ENCODE measurements at regions of chr17 and their contacts with region 1.

Region 1: GRCh38 chr17:79707931-79708891 is 22.5 kb upstream of the ENPP7 start:
- DNase-seq: peak in 3 of 5 donors; percentile 28 to 56 (median 51)
- ATAC-seq: peak in 3 of 4 donors; percentile 27 to 59 (median 35)
- H3K4me3 ChIP-seq: peak overlapping the region in 3 of 12 donors; percentile 3 to 25 (median 16)
- H3K27ac ChIP-seq: no peak overlapping the region
- H3K4me1 ChIP-seq: peaks cover 0 to 4% (median 3%) of the 10 kb centered on the region in 12 donors
- H3K27me3 ChIP-seq: peaks cover 0 to 47% (median 3%) of the 10 kb centered on the region in 9 donors
- CTCF ChIP-seq: peak; percentile 72 to 84 (median 80)
- POLR2A ChIP-seq: no peak

Region 2: GRCh38 chr17:79087428-79088143 is 620.6 kb before region 1 on chr17:
- intact Hi-C with region 1: loop called in 4 of 10 experiments (anchors 10 kb)
- DNase-seq: peak; percentile 56 to 83 (median 64)
- ATAC-seq: peak; percentile 49 to 73 (median 64)
- H3K4me3 ChIP-seq: no peak overlapping the region
- H3K27ac ChIP-seq: no peak overlapping the region
- H3K4me1 ChIP-seq: peaks cover 0 to 18% (median 5%) of the 10 kb centered on the region in 12 donors
- H3K27me3 ChIP-seq: peaks cover 0 to 18% (median 0%) of the 10 kb centered on the region in 9 donors
- CTCF ChIP-seq: peak; percentile 77 to 97 (median 92)
- POLR2A ChIP-seq: no peak

Region 3: DNA sequence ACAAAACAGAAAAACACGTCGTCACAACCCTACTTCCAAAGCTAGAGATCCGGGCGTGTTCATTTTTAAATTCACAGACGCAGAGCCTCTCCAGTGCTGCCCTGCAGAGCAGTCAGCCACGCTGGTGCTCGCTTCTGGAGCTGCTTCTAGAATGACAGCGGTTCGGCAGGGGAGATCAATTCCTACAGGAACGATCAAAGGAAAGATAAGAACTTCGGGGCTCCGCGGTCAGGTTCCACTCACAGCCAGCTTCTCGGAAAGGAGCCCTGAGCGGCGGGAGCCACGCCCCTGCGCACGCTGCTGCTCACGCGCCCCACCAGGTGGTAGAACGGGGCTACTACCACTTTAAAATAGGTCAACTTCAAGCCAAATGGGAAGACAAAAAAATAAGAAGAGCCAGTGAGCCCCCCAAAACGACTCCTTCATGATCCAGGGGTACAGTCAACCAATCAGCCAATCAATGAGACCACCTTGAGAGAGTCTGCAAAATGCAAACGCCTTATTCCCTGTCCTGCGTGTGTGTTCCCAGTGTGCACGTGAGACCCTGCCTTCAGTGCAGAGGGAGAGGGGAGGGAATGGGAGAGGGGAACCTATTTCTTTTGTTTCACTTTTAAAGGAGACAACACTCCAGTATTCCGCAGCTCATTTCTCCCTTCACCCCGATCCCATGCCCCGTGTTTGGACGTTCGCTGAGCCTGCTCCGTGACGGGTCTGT is 307.1 kb before region 1 on chr17:
- intact Hi-C with region 1: loop called in 8 of 10 experiments (anchors 2 to 10 kb)
- DNase-seq: peak; percentile 54 to 80 (median 67)
- ATAC-seq: peak; percentile 54 to 91 (median 81)
- H3K4me3 ChIP-seq: peak overlapping the region in 9 of 12 donors; percentile 0 to 42 (median 20)
- H3K27ac ChIP-seq: no peak overlapping the region
- H3K4me1 ChIP-seq: peaks cover 0 to 8% (median 2%) of the 10 kb centered on the region in 12 donors
- H3K27me3 ChIP-seq: peaks cover 13 to 88% (median 50%) of the 10 kb centered on the region in 9 donors
- CTCF ChIP-seq: peak; percentile 86 to 97 (median 90)
- POLR2A ChIP-seq: no peak

Region 4: DNA sequence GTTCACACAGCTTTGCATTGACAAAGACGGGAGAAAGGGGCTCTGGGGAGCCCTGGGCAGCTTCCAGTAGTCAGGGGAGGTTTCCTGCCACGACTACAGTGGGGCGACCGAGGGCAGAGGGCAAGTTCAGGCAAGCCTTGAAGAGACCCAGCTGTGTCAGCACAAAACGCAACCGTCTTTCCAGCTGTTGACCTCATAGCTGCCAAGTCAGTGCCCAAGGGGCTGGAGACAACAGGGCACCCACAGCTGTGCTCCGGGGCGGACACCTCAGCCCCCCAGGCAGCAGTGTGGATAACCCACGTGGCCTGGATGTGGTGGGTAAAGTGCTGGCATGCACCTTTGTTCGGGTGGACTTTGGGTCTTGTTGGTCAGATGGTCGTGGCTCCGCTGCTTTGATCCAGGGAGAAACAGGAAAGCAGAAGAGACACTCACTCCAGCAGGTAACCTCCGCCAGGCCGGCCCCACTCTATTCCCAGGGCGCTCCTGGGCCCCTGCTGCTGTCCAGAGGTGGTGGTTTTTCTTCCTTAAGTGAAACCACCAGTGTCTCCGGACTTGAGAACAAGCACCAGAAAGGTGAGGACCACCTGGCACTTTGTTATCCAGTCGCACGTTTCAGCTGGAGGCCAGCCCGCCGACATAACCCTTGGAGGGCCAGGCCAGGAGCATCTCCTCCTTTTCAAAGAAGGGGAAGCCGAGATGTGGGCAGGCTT is 52.1 kb after region 1 on chr17:
- intact Hi-C with region 1: no loop called
- DNase-seq: peak in 1 of 5 donors; percentile 28
- ATAC-seq: no peak
- H3K4me3 ChIP-seq: no peak overlapping the region
- H3K27ac ChIP-seq: no peak overlapping the region
- H3K4me1 ChIP-seq: no peaks in the 10 kb centered on the region
- H3K27me3 ChIP-seq: peaks cover 0 to 9% (median 0%) of the 10 kb centered on the region in 9 donors
- CTCF ChIP-seq: no peak
- POLR2A ChIP-seq: no peak

Measured in heart left ventricle (tissue), 16 donors.